Activated B cell treated with CpG ODN at 0.5 μM for 24 hours (primary cell): ENCODE measurements at regions of chr15 and their contacts with region 1.

Region 1: GRCh38 chr15:92077353-92078085 is 224.0 kb downstream of the SLCO3A1 start:
- DNase-seq: no peak
- ATAC-seq: no peak
- H3K4me3 Mint-ChIP-seq: no peak overlapping the region
- H3K27ac Mint-ChIP-seq: no peak overlapping the region
- H3K4me1 Mint-ChIP-seq: no peaks in the 10 kb centered on the region
- H3K27me3 Mint-ChIP-seq: no peaks in the 10 kb centered on the region
- CTCF ChIP-seq: no peak

Region 2: DNA sequence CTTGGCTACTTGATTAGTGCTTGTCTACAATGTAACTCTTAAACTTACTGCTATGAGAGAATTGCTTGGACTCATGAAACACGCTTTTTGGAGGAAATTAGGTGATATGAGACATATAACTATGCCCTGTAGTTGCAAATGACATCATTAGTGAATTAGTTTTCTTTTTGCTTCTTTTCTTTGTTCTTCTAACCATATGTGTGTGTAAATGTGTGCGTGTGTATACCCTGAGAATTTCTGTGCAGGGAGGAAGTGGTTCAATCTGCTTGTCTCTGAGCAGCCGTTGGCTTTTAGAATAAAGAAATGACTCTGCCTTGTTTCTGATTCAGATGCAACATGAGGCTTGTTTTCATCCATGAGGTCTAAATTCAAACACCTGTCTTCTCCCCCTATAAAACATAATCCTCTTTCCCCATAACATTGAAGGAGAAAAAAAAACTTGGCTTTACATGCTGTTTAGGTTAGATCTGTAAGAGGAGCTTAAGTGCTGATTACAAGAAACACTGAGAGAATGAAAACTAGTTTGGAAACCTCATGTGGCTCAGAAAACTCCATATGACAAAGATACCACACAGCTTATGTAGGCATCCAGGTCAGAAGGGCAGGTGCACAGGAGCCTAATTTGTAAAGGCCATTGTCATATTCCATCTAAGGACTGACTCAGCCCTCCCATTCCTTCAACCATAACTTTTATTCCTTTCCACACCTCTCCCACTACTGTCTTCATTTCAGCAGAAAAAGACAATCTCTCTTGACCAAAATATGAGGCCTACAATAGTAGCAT is 1390.9 kb before region 1 on chr15:
- CTCF ChIA-PET with region 1: no interaction called
- POLR2A ChIA-PET with region 1: no interaction called
- intact Hi-C with region 1: no loop called
- DNase-seq: no peak
- ATAC-seq: peak; percentile 79
- H3K4me3 Mint-ChIP-seq: no peak overlapping the region
- H3K27ac Mint-ChIP-seq: peak overlapping the region; percentile 67
- H3K4me1 Mint-ChIP-seq: peaks cover 25% of the 10 kb centered on the region
- H3K27me3 Mint-ChIP-seq: peaks cover 2% of the 10 kb centered on the region
- CTCF ChIP-seq: no peak

Region 3: DNA sequence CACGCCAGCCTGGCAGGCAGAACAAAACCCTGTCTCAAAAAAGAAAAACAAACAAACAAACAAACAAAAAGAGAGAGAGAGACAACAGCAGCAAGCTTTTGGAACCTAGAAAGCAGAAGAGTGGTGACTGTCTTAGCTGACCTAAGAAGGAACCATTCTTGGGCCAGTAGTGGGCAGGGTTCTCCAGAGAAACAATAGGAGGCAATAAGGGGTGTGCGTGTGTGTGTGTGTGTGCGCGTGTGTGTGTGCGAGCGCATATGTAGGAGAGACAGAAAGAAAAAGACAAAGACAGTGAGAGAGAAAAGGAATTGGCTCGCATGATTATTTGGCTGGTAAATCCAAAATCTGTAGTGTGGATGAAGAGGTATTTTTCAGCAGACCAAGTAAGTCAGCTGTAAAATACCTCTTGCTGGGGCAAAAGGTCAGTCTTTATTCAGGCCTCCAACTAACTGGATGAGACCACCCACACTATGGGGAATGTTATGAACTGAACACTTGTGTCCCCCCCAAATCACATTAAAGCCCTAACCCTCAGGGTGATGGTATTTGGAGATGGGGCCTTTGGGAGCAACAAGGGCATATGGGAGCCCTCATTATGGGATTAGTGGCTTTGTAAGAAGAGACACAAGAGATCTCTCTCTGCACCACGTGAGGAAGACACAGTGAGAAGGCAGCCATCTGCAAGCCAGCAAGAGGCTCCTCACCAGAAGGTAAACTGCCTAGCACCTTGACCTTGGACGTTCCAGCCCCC is 1375.5 kb before region 1 on chr15:
- CTCF ChIA-PET with region 1: no interaction called
- POLR2A ChIA-PET with region 1: no interaction called
- intact Hi-C with region 1: no loop called
- DNase-seq: no peak
- ATAC-seq: no peak
- H3K4me3 Mint-ChIP-seq: no peak overlapping the region
- H3K27ac Mint-ChIP-seq: no peak overlapping the region
- H3K4me1 Mint-ChIP-seq: no peaks in the 10 kb centered on the region
- H3K27me3 Mint-ChIP-seq: no peaks in the 10 kb centered on the region
- CTCF ChIP-seq: no peak

Region 4: DNA sequence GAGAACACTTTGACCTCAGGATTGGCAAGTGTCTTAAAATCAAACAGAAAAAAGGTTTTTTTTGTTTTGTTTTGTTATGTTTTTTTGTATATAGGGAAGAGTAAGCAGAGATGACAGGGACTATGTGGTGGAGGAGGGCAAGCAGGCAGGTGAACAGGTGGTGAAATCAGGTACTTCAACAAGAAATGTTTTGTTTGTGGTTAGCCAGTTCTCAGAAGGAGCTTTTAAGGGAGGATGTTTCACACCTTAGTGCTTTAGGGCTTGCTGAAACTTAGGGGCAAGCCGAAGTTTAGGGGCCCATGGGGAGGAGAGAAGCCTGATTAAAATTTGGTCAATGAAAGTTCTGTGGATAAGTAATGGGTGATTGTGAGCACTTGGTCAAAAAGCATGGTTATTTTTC is 594.7 kb before region 1 on chr15:
- CTCF ChIA-PET with region 1: no interaction called
- POLR2A ChIA-PET with region 1: no interaction called
- intact Hi-C with region 1: no loop called
- DNase-seq: no peak
- ATAC-seq: no peak
- H3K4me3 Mint-ChIP-seq: no peak overlapping the region
- H3K27ac Mint-ChIP-seq: no peak overlapping the region
- H3K4me1 Mint-ChIP-seq: no peaks in the 10 kb centered on the region
- H3K27me3 Mint-ChIP-seq: peaks cover 6% of the 10 kb centered on the region
- CTCF ChIP-seq: no peak

Region 5: DNA sequence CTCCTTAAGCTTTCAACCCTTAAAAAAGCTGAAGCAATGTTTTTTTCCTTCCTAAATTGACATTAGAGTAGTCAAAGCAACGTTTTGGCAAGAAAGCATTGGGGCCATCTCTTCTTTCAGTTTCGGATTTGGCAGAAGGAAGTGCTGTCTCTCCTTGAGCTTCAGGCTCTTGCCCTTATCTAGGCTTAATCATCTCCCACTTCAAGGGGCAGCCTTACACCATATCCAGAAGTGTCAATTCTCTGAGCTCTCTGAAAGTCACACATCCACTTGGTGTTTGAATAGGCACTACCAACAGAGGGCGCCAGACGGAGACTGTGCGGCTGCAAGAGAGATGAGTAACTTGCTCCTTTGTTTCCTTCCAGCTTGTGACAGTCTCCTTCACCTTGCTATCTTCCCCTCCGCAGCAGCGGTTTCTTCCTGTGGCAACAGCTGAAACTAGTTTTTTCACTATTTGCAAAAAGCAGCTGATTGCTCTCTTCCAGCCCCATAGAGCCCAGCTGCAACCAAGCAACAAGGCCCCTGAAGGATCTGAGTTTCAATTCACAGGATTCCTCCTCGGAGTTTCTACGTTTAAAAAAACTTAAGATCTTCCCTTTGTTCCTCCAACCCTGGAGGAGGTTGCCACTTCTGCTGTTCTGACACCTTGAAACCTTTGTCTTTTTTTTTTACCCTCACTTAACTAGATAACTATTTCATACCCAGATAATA is 371.0 kb before region 1 on chr15:
- CTCF ChIA-PET with region 1: interaction called, 6 read pairs
- POLR2A ChIA-PET with region 1: no interaction called
- intact Hi-C with region 1: loop called (anchors 2 kb)
- DNase-seq: no peak
- ATAC-seq: no peak
- H3K4me3 Mint-ChIP-seq: no peak overlapping the region
- H3K27ac Mint-ChIP-seq: no peak overlapping the region
- H3K4me1 Mint-ChIP-seq: no peaks in the 10 kb centered on the region
- H3K27me3 Mint-ChIP-seq: peaks cover 5% of the 10 kb centered on the region
- CTCF ChIP-seq: no peak

Region 6: GRCh38 chr15:91885714-91886270 is 191.7 kb before region 1 on chr15:
- CTCF ChIA-PET with region 1: no interaction called
- POLR2A ChIA-PET with region 1: no interaction called
- intact Hi-C with region 1: loop called (anchors 5 kb)
- DNase-seq: no peak
- ATAC-seq: no peak
- H3K4me3 Mint-ChIP-seq: no peak overlapping the region
- H3K27ac Mint-ChIP-seq: no peak overlapping the region
- H3K4me1 Mint-ChIP-seq: no peaks in the 10 kb centered on the region
- H3K27me3 Mint-ChIP-seq: no peaks in the 10 kb centered on the region
- CTCF ChIP-seq: no peak